ENCODE measurements at regions of chr1 and their contacts with region 1.

Region 1: DNA sequence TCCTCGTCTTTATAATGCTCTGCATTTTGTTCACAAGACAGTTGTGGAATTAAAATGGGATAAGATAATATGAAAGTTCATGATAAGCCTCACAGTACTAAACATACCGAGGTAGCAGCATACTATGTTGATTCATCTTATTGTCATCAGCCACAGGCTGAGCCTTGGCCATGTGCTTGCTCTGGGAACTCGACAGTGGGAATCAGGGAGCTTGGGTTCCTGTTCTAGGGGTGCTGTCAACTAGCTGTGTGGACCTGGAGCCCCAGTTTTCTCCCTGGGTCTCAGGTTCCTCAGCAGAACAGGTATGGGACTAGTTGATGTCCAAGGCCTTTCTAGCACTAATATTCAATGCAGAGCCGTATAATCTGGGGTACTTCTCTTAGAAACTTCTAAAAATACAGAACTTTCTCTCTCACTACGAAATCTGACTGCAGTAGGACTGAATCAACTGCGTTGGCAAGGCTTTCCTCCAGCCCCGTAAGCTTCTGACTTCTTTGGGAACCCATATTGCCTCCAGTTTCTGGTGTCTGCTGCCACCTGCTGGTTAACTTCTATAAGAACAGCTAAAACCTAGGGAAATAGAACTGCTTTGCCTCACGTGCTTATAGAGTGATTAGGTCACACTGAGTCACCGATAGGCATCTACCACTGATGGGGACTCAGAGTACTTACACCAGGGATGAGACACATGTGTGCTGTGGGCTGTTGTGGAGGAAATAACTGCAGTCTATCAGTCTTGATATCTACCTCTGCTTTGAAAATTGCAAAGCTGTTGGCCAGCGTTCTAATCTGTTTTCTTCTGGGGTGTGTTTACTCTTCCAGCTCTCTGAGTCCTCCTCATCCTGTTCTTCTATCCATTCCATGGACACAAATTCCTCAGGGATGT is 110.9 kb downstream of the RGL1 start:
- DNase-seq: peak; percentile 68 to 94
- H3K4me3 ChIP-seq: no peak overlapping the region
- H3K27ac ChIP-seq: peak overlapping the region; percentile 29; the same call in 1 of the 2 replicates
- H3K4me1 ChIP-seq: peaks cover 12% of the 10 kb centered on the region
- H3K27me3 ChIP-seq: no peaks in the 10 kb centered on the region
- CTCF ChIP-seq: peak; percentile 93

Region 2: DNA sequence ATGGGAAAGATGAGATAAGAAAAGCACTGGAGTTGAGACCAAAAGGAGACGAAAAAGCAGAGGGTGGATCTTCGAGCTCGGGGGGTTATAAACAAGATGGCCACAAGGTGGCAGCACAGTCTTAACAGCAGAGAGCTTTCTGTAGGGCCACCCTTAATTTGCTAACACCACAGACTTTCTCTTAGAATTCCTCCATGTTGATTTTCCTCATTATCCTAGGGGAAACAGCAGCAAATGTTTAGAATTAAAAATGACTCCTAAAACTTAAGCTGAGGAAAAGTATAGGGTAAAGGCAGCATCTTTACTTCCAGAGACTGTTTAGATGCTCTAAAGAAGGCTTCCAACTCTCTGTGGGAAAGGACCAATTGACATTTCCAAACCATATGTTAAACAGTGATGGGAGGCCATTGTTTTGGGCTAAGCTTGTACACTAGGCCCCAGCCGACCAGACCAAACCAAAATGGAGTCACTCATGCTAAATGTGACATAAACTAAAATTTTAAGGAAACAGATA is 260.2 kb before region 1 on chr1:
- CTCF ChIA-PET with region 1: interaction called, 17 read pairs
- POLR2A ChIA-PET with region 1: no interaction called
- intact Hi-C with region 1: loop called (anchors 1 kb)
- DNase-seq: peak; percentile 54 to 68
- H3K4me3 ChIP-seq: no peak overlapping the region
- H3K27ac ChIP-seq: no peak overlapping the region
- H3K4me1 ChIP-seq: no peaks in the 10 kb centered on the region
- H3K27me3 ChIP-seq: no peaks in the 10 kb centered on the region
- CTCF ChIP-seq: peak; percentile 94

Region 3: DNA sequence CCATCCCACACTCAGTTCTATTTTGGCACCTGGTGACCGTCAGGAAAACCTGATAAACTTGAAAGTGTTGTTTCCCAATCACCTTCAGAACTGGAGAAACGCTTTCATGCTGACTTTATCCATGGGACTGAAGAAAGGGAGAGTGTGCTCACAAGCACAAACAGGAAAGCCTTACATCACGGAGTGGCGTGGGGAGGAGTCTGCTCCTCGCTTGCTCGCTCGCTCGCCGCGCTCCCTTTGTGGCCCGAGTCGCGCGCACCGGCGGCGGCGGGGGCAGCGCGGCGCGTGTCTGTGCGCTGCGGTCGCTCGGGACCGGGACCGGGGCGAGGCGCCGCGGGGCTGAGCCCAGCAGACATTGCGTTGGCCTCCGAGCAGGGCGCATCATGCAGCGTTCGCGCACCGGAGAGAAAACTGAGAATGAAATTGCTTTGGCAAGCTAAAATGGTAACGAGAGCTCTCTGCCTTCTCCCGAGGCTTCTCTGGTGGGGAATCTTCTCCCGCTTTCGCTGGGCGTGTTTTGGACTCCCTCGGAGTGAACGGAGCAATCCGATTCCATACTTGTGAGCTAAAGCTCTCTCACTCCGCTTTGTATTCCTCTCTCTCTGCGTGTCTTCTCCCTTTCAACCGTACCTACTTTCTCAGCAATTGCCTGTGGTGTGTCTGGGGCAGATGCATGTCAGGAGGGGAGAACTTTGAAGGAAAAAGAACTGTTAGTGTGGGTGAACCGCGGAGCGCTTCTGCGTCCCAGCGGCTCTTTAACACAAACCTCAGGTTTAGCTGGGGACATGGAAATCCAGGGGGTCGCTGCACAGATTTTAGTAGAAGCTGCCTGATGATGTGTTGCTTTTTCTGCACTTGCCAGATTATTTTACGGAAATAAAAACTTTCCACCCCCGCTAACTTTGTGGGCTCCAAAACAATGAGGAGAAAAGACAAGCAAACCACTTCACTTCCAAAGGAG is 110.7 kb before region 1 on chr1 and contains the start of gene RGL1:
- CTCF ChIA-PET with region 1: no interaction called
- POLR2A ChIA-PET with region 1: interaction called, 3 read pairs
- intact Hi-C with region 1: loop called (anchors 1 kb)
- DNase-seq: peak; percentile 68 to 91
- H3K4me3 ChIP-seq: peak within 1 kb of the TSS; percentile 77
- H3K27ac ChIP-seq: peak within 1 kb of the TSS; percentile 66
- H3K4me1 ChIP-seq: peaks cover 36% of the 10 kb centered on the region
- H3K27me3 ChIP-seq: no peaks in the 10 kb centered on the region
- CTCF ChIP-seq: no peak
- total RNA-seq, gene RGL1: 2.1 and 2.6 TPM in 2 replicates

Region 4: DNA sequence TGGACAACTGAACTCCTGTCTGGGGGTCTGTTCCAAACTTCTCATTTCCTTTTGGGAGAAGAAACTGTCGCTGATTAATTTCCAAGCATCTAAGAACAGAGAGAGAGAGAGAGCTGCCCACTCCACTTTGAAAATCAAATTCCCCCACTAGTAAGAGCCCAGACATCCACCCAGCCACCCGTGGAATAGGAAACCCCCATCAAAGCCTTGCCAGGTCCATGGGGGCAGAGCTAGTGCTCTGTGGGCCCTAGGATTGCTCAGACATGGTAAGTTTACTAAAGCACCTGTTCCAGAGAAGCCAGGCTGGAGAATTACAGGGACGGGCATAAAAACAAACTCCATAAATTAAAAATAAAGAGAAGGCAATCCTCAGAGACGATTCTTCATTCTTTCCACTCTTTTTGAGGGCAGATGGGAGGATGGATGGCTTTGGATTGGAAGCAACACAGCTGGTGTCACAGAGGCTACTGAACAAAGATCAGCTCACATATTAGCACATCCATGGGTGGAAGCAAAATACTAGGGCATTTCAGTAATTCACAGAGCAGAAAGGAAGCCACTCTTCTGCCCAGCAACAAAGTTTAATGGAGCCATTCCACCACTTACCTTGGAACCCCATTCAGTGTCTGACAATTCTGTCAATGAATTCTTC is 17.8 kb after region 1 on chr1:
- CTCF ChIA-PET with region 1: no interaction called
- POLR2A ChIA-PET with region 1: no interaction called
- intact Hi-C with region 1: no loop called
- DNase-seq: no peak
- H3K4me3 ChIP-seq: no peak overlapping the region
- H3K27ac ChIP-seq: no peak overlapping the region
- H3K4me1 ChIP-seq: no peaks in the 10 kb centered on the region
- H3K27me3 ChIP-seq: no peaks in the 10 kb centered on the region
- CTCF ChIP-seq: no peak

Region 5: DNA sequence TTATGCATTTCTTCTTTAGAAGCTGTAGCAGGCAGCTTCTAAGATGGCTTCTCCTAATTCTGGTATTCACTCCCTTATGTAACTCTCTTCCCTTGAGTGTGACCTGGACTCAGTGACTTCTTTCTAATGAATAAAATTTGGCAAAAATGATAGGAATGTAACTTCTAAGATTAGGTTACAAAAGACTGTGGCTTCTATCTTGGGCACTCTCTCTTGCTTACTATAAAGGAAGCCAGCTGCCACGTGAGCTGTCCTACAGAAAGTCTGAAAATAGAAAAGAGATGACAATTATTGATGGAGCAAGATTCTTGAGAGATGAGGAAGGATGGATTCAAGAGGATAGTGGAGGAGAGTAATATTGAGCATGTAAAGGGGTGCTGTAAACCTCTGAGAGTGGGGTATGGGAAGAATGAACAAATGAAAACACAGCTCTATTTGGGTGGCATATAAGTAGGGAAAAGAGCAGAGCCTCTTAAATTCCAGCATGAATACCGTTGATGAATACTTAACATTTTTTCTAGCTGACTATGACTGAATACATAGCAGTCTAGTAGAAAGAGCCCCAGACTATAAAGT is 141.1 kb after region 1 on chr1:
- CTCF ChIA-PET with region 1: no interaction called
- POLR2A ChIA-PET with region 1: no interaction called
- intact Hi-C with region 1: loop called (anchors 2 kb)
- DNase-seq: peak; percentile 47 to 70
- H3K4me3 ChIP-seq: no peak overlapping the region
- H3K27ac ChIP-seq: peak overlapping the region; percentile 62
- H3K4me1 ChIP-seq: peaks cover 34% of the 10 kb centered on the region
- H3K27me3 ChIP-seq: no peaks in the 10 kb centered on the region
- CTCF ChIP-seq: no peak

Region 6: GRCh38 chr1:184664042-184664655 is 748.3 kb after region 1 on chr1:
- CTCF ChIA-PET with region 1: interaction called, 3 read pairs
- POLR2A ChIA-PET with region 1: no interaction called
- intact Hi-C with region 1: loop called (anchors 5 kb)
- DNase-seq: peak in 1 of 2 experiments; percentile 49
- H3K4me3 ChIP-seq: no peak overlapping the region
- H3K27ac ChIP-seq: no peak overlapping the region
- H3K4me1 ChIP-seq: no peaks in the 10 kb centered on the region
- H3K27me3 ChIP-seq: no peaks in the 10 kb centered on the region
- CTCF ChIP-seq: peak; percentile 80